Mammary epithelial cell (primary cell): ENCODE measurements at regions of chr5 and their contacts with region 1.

Region 1: DNA sequence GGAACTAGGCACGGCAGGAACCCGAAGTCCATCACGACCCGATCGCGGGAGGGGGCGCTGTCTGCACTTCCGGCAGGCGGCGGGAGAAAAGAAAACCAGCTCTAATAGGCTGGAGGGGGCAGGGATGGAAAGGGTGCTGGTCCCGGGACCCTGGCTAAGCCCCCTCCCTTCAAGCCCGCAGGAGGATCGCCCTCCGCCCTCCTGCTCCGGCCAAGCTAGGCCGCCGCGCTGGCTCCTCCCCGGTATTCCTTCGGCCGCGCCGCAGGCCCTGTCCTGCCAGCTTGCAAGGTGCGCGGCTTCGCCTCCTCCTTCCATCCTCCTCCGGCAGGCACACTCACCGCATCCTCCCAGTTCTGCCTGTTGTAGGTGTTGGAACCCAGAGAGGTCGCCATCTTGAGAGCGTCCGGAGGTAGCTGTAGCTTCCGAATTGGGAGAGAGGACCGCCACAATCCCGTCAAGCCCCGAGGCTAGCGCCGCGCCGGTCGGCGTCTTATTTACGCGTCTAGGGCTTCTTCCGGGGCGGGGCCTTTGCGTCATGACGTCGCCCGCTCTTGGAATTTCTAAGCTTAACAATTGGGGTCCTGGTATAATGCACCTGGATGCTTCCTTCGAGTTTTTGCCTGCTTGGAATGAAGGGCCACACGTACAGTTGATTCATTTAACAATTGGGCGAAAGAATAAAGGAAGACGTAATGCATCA is at the start of gene RBM22:
- DNase-seq: peak; percentile 83
- H3K4me3 ChIP-seq: peak within 1 kb of the TSS; percentile 73 to 97 (median 84)
- H3K27ac ChIP-seq: peak within 1 kb of the TSS; percentile 78
- H3K4me1 ChIP-seq: peaks cover 11% of the 10 kb centered on the region
- H3K27me3 ChIP-seq: no peaks in the 10 kb centered on the region
- CTCF ChIP-seq: peak; percentile 22 to 74
- total RNA-seq, gene RBM22: 28.5 to 34.7 TPM

Region 2: DNA sequence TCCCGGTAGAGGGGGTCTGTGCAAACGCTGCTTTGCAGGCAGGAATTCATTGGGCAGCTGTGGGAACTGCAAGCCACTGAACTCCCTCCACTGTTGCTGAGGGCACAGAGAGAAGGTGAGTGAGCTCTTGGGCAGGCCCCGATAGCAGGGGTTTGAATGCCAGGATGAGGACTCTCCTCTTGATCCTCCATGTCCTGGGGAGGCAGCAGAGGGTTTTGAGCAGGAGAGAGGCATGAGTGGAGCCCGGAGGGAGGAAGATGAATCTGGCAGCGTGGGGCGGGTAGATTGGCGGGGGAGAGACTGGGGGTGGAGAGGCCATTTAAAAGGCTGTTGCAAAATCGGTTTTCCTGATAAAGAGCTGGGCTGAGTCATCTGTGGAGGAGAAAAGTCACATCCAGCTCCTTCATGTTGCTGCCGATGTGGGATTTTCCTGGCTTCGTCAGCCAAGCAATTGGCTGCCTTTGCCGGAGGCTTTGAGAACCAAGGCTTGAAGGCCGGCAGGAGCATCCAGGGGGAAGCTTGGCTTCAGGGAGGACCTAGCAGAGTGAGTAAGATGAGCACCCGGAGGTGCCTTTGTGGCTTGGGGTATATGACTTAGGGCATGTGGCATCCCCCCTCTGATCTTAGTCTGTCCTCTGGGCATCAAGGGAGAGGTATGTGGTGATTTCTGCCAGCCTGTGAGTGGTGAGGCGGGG is 60.3 kb before region 1 on chr5 and contains the start of gene SYNPO:
- CTCF ChIA-PET with region 1: no interaction called
- dilution Hi-C with region 1: no loop called
- in situ Hi-C with region 1: no loop called
- intact Hi-C with region 1: loop called (anchors 5 kb)
- DNase-seq: peak; percentile 97
- H3K4me3 ChIP-seq: peak within 1 kb of the TSS in 1 of 3 experiments; percentile 23
- H3K27ac ChIP-seq: peak within 1 kb of the TSS; percentile 49
- H3K4me1 ChIP-seq: peaks cover 81% of the 10 kb centered on the region
- H3K27me3 ChIP-seq: no peaks in the 10 kb centered on the region
- CTCF ChIP-seq: no peak
- total RNA-seq, gene SYNPO: 1.3 to 5.3 TPM

Region 3: DNA sequence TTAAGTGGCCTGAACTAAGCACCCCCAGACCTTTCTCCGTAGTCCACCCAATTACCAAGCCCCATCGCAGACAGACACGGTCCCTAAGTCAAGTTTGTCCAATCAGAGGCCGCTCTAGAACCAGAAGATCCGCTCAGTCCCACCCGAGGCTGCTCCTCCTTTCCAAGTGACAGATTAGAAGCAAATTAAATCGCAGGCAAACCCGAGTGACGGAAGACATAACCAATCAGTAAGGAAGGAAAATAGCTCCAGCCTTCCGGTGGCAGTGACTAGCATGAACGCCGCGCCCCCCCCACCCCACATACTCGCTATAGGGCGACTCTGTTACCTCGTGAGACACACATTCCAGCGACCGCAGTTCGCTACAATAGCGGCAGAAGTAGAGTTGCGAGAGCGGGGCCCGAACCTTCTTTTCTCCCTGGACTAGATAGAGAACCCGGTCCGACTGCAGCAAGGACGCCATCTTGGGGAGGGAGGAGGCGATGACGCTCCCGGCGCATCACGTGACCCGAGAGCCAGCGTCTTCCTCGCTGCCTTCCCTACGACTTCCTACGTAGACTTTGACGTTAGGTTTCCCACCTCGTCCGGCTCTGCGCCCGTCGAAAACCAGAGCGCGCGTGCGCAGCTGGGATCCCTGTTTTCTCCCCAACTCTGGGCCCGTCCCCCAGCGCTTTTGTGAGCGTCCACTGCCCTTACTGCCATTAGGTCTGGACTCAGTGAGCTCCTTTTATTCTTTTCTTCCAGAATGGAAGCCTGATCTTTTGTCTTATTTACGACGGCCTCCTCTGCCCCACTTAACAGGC is 58.0 kb after region 1 on chr5 and contains the start of gene DCTN4:
- CTCF ChIA-PET with region 1: no interaction called
- dilution Hi-C with region 1: no loop called
- in situ Hi-C with region 1: no loop called
- intact Hi-C with region 1: loop called (anchors 1 kb)
- DNase-seq: peak; percentile 100
- H3K4me3 ChIP-seq: peak within 1 kb of the TSS; percentile 73 to 75 (median 74)
- H3K27ac ChIP-seq: peak within 1 kb of the TSS; percentile 93
- H3K4me1 ChIP-seq: peaks cover 23% of the 10 kb centered on the region
- H3K27me3 ChIP-seq: no peaks in the 10 kb centered on the region
- CTCF ChIP-seq: no peak
- total RNA-seq, gene DCTN4: 64.7 to 70.9 TPM

Region 4: DNA sequence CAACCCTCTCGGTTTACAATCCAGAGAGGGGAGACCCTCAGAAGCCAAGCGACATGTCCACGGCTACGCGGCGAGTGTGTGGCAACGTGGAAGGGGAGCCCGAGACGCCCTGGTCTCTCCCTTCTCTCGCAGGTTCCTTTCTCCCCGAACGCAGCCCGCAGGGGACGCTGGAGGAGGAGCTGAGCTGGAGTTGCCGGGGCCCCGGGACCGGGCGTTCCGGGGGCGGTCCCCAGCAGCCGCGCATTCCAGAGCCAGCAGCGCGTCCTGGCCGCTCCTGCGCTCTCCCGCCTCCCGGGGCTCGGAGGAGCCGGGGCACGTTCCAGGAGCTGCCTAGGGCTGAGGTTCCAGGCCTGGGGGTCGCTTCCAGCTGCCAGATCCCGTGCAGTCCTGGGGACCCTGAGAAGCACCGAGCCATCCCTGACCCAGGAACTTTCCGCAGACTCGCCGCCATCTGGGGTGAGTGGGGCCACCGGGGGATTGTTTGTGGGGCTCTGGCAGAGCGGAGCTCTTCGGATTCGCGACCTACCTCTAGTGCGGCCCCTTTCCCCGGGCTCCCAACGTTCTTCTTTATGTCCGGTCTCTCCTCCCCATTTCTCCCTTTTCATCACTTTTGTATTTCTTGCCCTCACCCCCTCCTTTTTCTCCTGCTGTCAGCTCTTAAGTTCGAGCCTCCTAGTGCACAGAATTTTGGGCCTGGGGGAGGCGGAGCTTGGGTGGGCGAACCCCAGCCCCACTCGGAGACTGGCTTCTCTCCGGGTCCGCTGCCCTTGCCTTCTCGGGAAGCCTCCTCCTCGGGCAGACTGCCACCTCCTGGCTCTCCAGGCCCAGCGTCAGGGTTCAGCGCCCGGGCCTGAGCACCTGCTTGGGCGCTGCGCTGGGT is 78.0 kb after region 1 on chr5 and contains the start of gene SMIM3:
- CTCF ChIA-PET with region 1: no interaction called
- dilution Hi-C with region 1: no loop called
- in situ Hi-C with region 1: no loop called
- intact Hi-C with region 1: loop called (anchors 1 kb)
- DNase-seq: peak; percentile 72
- H3K4me3 ChIP-seq: peak within 1 kb of the TSS; percentile 66 to 88 (median 81)
- H3K27ac ChIP-seq: peak within 1 kb of the TSS; percentile 81
- H3K4me1 ChIP-seq: peaks cover 57% of the 10 kb centered on the region
- H3K27me3 ChIP-seq: no peaks in the 10 kb centered on the region
- CTCF ChIP-seq: peak in 1 of 2 donors; percentile 67
- total RNA-seq, gene SMIM3: 17.5 to 24.3 TPM

Region 5: DNA sequence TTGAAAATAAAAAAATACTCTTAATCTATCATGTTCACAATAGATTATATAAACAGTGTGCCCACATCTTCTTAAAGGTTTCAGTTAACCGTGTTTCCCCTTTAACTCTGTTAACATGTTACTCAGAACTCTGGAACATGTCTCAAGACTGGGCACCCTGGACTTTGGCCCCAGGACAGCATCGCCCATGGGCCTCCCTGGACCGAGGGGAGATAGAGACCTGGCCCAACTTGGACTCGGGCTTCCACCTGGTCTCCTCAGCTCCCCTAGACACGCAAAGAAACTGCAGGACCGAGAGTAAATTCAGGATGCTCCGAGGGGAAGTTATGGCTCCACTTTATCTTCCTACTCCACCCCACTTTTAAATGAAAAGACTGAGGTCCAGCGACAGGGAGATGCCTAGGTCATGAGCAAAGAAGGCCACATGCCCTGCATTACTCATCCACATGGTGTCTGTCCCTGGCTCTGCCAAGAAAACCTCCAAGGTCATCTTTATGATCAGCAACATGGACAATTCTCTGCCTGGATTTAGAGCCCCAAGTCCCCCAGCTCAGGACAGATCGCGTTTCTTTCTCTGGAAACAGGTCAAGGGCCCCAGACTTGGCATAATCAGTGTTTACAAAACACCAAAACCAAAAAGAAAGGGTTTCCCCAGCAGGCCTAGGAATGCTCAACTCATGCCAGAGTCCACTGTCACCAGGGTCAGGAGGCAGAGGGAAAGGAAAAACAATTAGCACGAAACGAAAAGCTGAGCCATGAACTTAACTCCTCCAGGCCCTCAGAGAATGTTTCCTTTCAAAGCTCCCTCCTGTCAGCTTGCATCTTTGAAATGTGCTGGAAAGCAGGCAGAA is 337.0 kb after region 1 on chr5:
- CTCF ChIA-PET with region 1: no interaction called
- dilution Hi-C with region 1: no loop called
- in situ Hi-C with region 1: no loop called
- intact Hi-C with region 1: loop called (anchors 2 kb)
- DNase-seq: no peak
- H3K4me3 ChIP-seq: no peak overlapping the region
- H3K27ac ChIP-seq: no peak overlapping the region
- H3K4me1 ChIP-seq: peaks cover 49% of the 10 kb centered on the region
- H3K27me3 ChIP-seq: no peaks in the 10 kb centered on the region
- CTCF ChIP-seq: no peak